T-cell (primary cell): ENCODE measurements at regions of chr13 and their contacts with region 1.

Region 1: DNA sequence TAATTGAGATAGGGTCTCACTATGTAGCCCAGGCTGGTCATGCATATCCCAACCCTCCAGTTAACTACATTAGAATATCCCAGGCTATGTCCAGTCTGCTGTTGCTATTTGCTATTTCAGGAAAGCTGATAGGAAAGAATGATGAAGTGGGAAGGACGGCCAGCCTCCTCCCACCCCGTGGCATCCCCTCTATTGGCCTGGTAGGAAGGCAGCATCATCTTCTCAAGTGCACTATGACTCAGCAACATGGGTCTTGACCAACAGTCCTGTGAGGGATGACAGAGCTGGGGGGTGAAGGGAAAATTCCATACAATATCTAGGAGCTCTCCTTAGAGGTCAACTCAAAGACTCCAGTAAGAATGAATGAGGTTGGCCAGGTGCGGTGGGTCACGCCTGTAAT is 48.0 kb upstream of the ABCC4 start:
- DNase-seq: no peak
- ATAC-seq: no peak
- H3K4me3 ChIP-seq: no peak overlapping the region
- H3K4me3 Mint-ChIP-seq: no peak overlapping the region
- H3K27ac ChIP-seq: no peak overlapping the region
- H3K27ac Mint-ChIP-seq: no peak overlapping the region
- H3K4me1 ChIP-seq: no peaks in the 10 kb centered on the region
- H3K4me1 Mint-ChIP-seq: no peaks in the 10 kb centered on the region
- H3K27me3 ChIP-seq: peaks cover 0 to 9% of the 10 kb centered on the region in 2 experiments
- H3K27me3 Mint-ChIP-seq: peaks cover 4 to 5% of the 10 kb centered on the region in 2 donors

Region 2: GRCh38 chr13:95239283-95239682 is 110.0 kb before region 1 on chr13:
- CTCF ChIA-PET with region 1: no interaction called
- POLR2A ChIA-PET with region 1: interaction called in 1 of 2 experiments, 10 read pairs
- DNase-seq: no peak
- ATAC-seq: no peak
- H3K4me3 ChIP-seq: no peak overlapping the region
- H3K4me3 Mint-ChIP-seq: no peak overlapping the region
- H3K27ac ChIP-seq: no peak overlapping the region
- H3K27ac Mint-ChIP-seq: no peak overlapping the region
- H3K4me1 ChIP-seq: no peaks in the 10 kb centered on the region
- H3K4me1 Mint-ChIP-seq: peaks cover 2 to 12% (median 7%) of the 10 kb centered on the region in 3 donors
- H3K27me3 ChIP-seq: no peaks in the 10 kb centered on the region
- H3K27me3 Mint-ChIP-seq: no peaks in the 10 kb centered on the region

Region 3: GRCh38 chr13:95367309-95367843 is 18.1 kb after region 1 on chr13:
- CTCF ChIA-PET with region 1: no interaction called
- POLR2A ChIA-PET with region 1: interaction called in 1 of 2 experiments, 10 read pairs
- DNase-seq: no peak
- ATAC-seq: no peak
- H3K4me3 ChIP-seq: no peak overlapping the region
- H3K4me3 Mint-ChIP-seq: no peak overlapping the region
- H3K27ac ChIP-seq: no peak overlapping the region
- H3K27ac Mint-ChIP-seq: no peak overlapping the region
- H3K4me1 ChIP-seq: no peaks in the 10 kb centered on the region
- H3K4me1 Mint-ChIP-seq: no peaks in the 10 kb centered on the region
- H3K27me3 ChIP-seq: peaks cover 0 to 8% of the 10 kb centered on the region in 2 experiments
- H3K27me3 Mint-ChIP-seq: peaks cover 3 to 7% of the 10 kb centered on the region in 2 donors